Right cardiac atrium (tissue), 5 donors: ENCODE measurements at regions of chrX and their contacts with region 1.

Region 1: GRCh38 chrX:139639253-139639652 is 68.7 kb downstream of the MCF2 start:
- DNase-seq: peak in 1 of 3 donors; percentile 58
- ATAC-seq: peak in 1 of 2 donors; percentile 72
- H3K4me3 ChIP-seq: no peak overlapping the region
- H3K27ac ChIP-seq: no peak overlapping the region
- H3K4me1 ChIP-seq: no peaks in the 10 kb centered on the region
- H3K27me3 ChIP-seq: no peaks in the 10 kb centered on the region

Region 2: GRCh38 chrX:139680378-139680777 is 41.1 kb after region 1 on chrX:
- intact Hi-C with region 1: loop called in 1 of 4 experiments (anchors 10 kb)
- DNase-seq: no peak
- ATAC-seq: no peak
- H3K4me3 ChIP-seq: no peak overlapping the region
- H3K27ac ChIP-seq: no peak overlapping the region
- H3K4me1 ChIP-seq: no peaks in the 10 kb centered on the region
- H3K27me3 ChIP-seq: no peaks in the 10 kb centered on the region

Region 3: DNA sequence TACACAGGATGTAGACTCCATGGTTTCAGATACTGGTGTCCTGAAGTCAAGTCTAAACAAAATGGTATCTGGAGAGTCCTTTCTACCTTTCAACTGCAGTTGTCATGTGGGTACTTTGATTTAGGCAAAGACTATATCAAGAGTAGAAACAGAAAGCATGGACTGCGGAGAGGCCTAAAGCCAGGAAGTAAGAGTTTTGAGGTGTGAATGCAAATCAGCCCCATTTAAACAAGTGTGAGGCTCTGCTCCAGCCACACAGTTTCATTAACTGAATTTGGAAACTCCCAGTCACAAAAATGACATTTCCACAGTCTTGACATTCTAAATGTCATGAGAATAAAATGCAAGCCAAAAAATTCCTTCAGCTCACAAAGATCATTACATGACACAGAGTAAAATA is 155.9 kb after region 1 on chrX:
- intact Hi-C with region 1: no loop called
- DNase-seq: no peak
- ATAC-seq: no peak
- H3K4me3 ChIP-seq: no peak overlapping the region
- H3K27ac ChIP-seq: no peak overlapping the region
- H3K4me1 ChIP-seq: no peaks in the 10 kb centered on the region
- H3K27me3 ChIP-seq: no peaks in the 10 kb centered on the region